ENCODE measurements at regions of chr15 and their contacts with region 1.

Region 1: GRCh38 chr15:72155635-72156616 is 37.7 kb downstream of the SENP8 start:
- DNase-seq: peak; percentile 74
- H3K4me3 ChIP-seq: peak overlapping the region; percentile 29 to 40 (median 39)
- H3K27ac ChIP-seq: peak overlapping the region; percentile 47
- H3K4me1 ChIP-seq: peaks cover 20% of the 10 kb centered on the region
- H3K27me3 ChIP-seq: no peaks in the 10 kb centered on the region
- CTCF ChIP-seq: peak; percentile 86 to 90

Region 2: GRCh38 chr15:71471347-71471746 is 684.6 kb before region 1 on chr15:
- CTCF ChIA-PET with region 1: no interaction called
- dilution Hi-C with region 1: no loop called
- in situ Hi-C with region 1: loop called in 1 of 2 experiments (anchors 25 kb)
- intact Hi-C with region 1: no loop called
- DNase-seq: peak; percentile 91
- H3K4me3 ChIP-seq: no peak overlapping the region
- H3K27ac ChIP-seq: peak overlapping the region; percentile 85
- H3K4me1 ChIP-seq: peaks cover 19% of the 10 kb centered on the region
- H3K27me3 ChIP-seq: no peaks in the 10 kb centered on the region
- CTCF ChIP-seq: no peak

Region 3: DNA sequence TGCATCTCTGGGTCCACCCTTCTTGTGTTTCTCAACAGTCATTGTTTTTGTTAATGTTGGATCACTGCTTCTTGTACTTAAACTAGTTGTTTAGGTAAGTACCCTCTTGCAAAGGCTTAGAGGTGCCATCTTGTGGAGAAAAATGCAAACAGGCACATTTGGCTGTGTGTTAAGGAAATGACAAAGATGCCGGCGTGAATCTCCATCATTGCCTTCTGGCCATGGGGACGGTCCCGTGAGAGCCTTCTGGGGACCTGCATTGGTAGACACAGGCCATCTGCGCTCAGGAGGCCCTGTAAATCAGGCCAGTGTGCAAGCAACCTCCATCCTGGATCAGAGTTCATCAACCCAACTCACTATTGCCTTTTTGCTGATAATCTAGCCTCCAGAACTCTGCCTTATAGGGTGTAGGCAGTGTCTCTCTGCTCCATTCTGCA is 504.2 kb before region 1 on chr15:
- CTCF ChIA-PET with region 1: no interaction called
- dilution Hi-C with region 1: no loop called
- in situ Hi-C with region 1: no loop called
- intact Hi-C with region 1: loop called (anchors 2 kb)
- DNase-seq: peak; percentile 65
- H3K4me3 ChIP-seq: no peak overlapping the region
- H3K27ac ChIP-seq: no peak overlapping the region
- H3K4me1 ChIP-seq: peaks cover 8% of the 10 kb centered on the region
- H3K27me3 ChIP-seq: no peaks in the 10 kb centered on the region
- CTCF ChIP-seq: peak; percentile 51 to 77

Region 4: GRCh38 chr15:71780115-71780976 is 375.6 kb before region 1 on chr15:
- CTCF ChIA-PET with region 1: no interaction called
- dilution Hi-C with region 1: no loop called
- in situ Hi-C with region 1: no loop called
- intact Hi-C with region 1: loop called (anchors 1 kb)
- DNase-seq: peak; percentile 23
- H3K4me3 ChIP-seq: no peak overlapping the region
- H3K27ac ChIP-seq: no peak overlapping the region
- H3K4me1 ChIP-seq: no peaks in the 10 kb centered on the region
- H3K27me3 ChIP-seq: no peaks in the 10 kb centered on the region
- CTCF ChIP-seq: peak; percentile 73 to 77

Region 5: GRCh38 chr15:71853543-71853942 is 302.4 kb before region 1 on chr15:
- CTCF ChIA-PET with region 1: no interaction called
- dilution Hi-C with region 1: no loop called
- in situ Hi-C with region 1: no loop called
- intact Hi-C with region 1: loop called (anchors 5 kb)
- DNase-seq: no peak
- H3K4me3 ChIP-seq: no peak overlapping the region
- H3K27ac ChIP-seq: no peak overlapping the region
- H3K4me1 ChIP-seq: no peaks in the 10 kb centered on the region
- H3K27me3 ChIP-seq: no peaks in the 10 kb centered on the region
- CTCF ChIP-seq: no peak

Region 6: GRCh38 chr15:72117486-72118399 is 38.2 kb before region 1 on chr15 and contains the start of gene MYO9A:
- CTCF ChIA-PET with region 1: no interaction called
- dilution Hi-C with region 1: no loop called
- in situ Hi-C with region 1: no loop called
- intact Hi-C with region 1: loop called (anchors 1 kb)
- DNase-seq: peak; percentile 97
- H3K4me3 ChIP-seq: peak within 1 kb of the TSS; percentile 88 to 98 (median 93)
- H3K27ac ChIP-seq: peak within 1 kb of the TSS; percentile 97
- H3K4me1 ChIP-seq: peaks cover 3% of the 10 kb centered on the region
- H3K27me3 ChIP-seq: no peaks in the 10 kb centered on the region
- CTCF ChIP-seq: no peak
- total RNA-seq, gene MYO9A: 43.2 to 55.2 TPM